GM13976 (cell line): ENCODE measurements at regions of chr16 and their contacts with region 1.

Region 1: GRCh38 chr16:50121721-50122445 is 31.2 kb upstream of the TENT4B start:
- DNase-seq: peak; percentile 47
- CTCF ChIP-seq: no peak

Region 2: DNA sequence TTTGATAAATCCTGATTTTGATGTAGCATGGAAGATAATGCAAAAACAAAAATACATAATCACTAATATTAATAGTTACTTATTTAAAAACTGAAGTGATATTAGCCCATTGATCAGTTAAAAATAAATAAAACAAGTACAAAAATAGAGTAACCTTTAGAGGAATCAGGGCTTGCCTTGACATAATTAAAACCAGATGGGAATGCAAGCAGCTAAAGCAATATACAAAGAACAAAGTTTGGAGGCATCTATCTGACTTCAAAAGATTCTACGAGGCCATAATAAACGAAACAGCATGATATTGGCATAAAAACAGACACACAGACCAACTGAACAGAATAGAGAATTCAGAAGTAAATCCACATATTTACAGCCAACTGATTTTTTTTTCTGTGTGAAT is 71.1 kb before region 1 on chr16:
- in situ Hi-C with region 1: no loop called
- DNase-seq: no peak
- CTCF ChIP-seq: no peak

Region 3: DNA sequence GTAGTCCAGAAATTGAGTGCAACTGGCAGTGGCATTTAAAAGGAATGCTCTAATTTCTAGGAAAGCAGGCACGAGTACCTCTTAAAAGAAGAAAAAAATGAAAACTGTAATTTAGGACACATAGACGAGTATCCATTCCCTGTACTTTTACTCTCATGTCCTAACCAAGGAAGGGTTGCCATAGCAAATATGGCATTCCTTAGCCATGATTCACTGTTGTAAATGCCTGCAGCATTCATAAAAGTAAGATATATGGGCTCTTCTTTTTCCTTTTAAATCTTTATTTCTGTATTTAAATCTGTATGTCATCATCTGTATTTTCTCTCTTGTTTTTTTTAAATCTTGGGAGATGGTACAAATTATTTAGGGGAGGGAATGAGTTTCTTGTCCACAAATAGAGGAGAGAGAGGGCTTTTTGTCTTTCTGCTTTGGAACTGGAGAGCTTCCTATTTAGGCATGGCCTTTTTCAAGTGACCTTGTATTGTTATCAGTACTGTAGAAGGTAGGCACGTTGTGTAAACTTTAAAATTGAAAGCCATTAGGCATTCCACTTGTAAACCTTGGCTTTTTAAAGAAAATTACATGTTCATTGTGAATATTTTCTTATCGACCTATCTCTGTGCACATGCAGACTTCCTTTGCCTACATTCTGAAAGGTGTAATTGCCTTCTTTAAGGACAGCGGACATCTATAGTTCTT is 81.2 kb after region 1 on chr16:
- in situ Hi-C with region 1: loop called (anchors 10 kb)
- DNase-seq: no peak
- CTCF ChIP-seq: no peak

Region 4: DNA sequence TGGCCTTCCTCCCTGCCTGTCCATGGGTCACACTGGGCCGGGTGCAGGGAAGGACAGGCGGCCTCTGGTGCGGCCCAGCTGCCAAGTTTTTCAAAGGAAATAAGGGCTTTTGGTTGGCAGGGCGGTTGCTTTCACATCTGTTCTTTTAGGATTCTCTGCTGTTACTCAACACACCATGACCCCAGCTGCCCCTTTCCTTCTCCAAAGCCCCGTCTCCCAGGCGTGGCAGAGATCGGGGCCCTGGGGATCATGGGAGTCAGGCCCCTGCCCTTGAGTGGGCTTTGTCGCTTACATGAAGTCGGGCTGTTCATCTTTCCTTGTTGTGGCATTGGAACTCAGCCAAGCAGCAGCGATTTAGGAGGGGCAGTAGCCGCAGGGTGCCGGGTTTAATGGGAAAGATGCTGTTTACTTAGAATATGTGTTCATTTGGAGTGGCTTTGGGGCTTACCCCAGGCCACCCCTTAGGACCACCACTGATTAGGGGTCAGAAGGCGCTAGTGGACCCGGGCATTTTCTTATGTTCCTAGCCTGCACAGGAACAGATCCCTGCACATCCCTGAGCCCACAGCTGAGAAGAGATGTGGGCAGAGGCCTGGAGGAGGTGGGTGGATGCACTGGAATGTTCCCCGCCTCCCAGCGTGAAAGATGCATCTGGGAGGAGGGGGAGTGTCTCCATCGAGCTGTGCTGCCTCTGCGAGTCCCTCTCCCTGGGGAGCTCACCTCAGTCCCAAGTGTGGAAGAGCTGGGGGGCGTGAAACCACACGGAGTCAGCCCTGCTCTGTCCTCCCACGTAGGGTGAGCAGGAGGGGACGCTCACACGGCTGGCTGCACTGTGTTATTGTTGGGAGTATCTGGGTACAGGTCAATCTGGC is 137.7 kb after region 1 on chr16:
- in situ Hi-C with region 1: no loop called
- DNase-seq: no peak
- CTCF ChIP-seq: no peak